K562 (cell line): ENCODE measurements at regions of chr10 and their contacts with region 1.

Region 1: GRCh38 chr10:71429929-71430328 is 33.2 kb downstream of the CDH23 start:
- DNase-seq: peak in 3 of 4 experiments; percentile 18 to 48 (median 42)
- ATAC-seq: peak; percentile 55; the same call in 2 of the 3 replicates
- H3K4me3 ChIP-seq: no peak overlapping the region
- H3K27ac ChIP-seq: no peak overlapping the region
- H3K4me1 ChIP-seq: no peaks in the 10 kb centered on the region
- H3K27me3 ChIP-seq: peaks cover 30 to 63% of the 10 kb centered on the region in 2 experiments
- CTCF ChIP-seq: peak; percentile 35 to 49 (median 44); a peak in 4 of 6 replicates
- EP300 ChIP-seq: no peak
- POLR2A ChIP-seq: no peak
- RAD21 ChIP-seq: no peak

Region 2: GRCh38 chr10:71413581-71413980 is 16.3 kb before region 1 on chr10:
- CTCF ChIA-PET with region 1: no interaction called
- POLR2A ChIA-PET with region 1: interaction called, 14 read pairs
- in situ Hi-C with region 1: no loop called
- intact Hi-C with region 1: no loop called
- DNase-seq: no peak
- ATAC-seq: no peak
- H3K4me3 ChIP-seq: no peak overlapping the region
- H3K27ac ChIP-seq: no peak overlapping the region
- H3K4me1 ChIP-seq: no peaks in the 10 kb centered on the region
- H3K27me3 ChIP-seq: peaks cover 0 to 17% of the 10 kb centered on the region in 2 experiments; a peak in 2 of 5 replicates
- CTCF ChIP-seq: no peak
- EP300 ChIP-seq: no peak
- POLR2A ChIP-seq: no peak
- RAD21 ChIP-seq: no peak

Region 3: GRCh38 chr10:71963756-71964668 is 534.1 kb after region 1 on chr10 and contains the start of gene CHST3:
- CTCF ChIA-PET with region 1: no interaction called
- POLR2A ChIA-PET with region 1: no interaction called
- in situ Hi-C with region 1: no loop called
- intact Hi-C with region 1: no loop called
- DNase-seq: no peak
- ATAC-seq: peak; percentile 70
- H3K4me3 ChIP-seq: no peak within 1 kb of the TSS
- H3K27ac ChIP-seq: no peak within 1 kb of the TSS
- H3K4me1 ChIP-seq: peaks cover 4 to 20% of the 10 kb centered on the region in 2 experiments; a peak in 4 of 5 replicates
- H3K27me3 ChIP-seq: peaks cover 30 to 65% of the 10 kb centered on the region in 2 experiments; a peak in 4 of 5 replicates
- CTCF ChIP-seq: no peak
- EP300 ChIP-seq: no peak
- POLR2A ChIP-seq: no peak
- RAD21 ChIP-seq: no peak
- polyA plus RNA-seq, gene CHST3: 0.01 to 0.04 TPM